ENCODE measurements at regions of chrX and their contacts with region 1.

Region 1: DNA sequence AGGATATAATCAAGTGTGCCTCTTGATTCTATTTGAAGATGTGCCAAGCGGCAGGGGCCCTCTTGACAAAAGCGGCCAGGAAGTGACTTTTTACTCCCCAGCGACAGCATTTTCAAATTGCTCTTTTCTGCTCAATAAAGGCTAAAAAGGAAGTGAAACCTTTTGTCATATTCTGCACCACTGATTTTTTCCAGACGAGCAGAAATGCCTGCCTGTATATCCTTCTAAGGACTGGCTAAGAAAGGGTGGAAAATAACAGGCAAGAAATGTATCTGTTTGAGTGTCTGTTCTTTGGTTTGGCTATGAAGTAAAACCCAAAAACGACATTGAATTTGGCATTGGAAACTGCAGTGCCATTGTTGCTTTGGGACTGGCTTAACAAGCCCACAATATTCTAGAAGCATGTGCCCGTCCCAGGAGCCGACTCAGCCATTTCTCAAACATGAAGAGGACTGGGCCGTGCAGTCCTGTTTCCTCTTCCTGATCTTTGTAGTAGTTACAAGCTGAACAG is 25.4 kb downstream of the TMSB4X start:
- DNase-seq: no peak
- ATAC-seq: peak; percentile 58
- H3K4me3 Mint-ChIP-seq: peak overlapping the region; percentile 79
- H3K27ac Mint-ChIP-seq: peak overlapping the region; percentile 95
- H3K4me1 Mint-ChIP-seq: peaks cover 42% of the 10 kb centered on the region
- H3K27me3 Mint-ChIP-seq: no peaks in the 10 kb centered on the region

Region 2: GRCh38 chrX:12955882-12956703 is 44.3 kb before region 1 on chrX:
- POLR2A ChIA-PET with region 1: interaction called, 26 read pairs
- DNase-seq: peak; percentile 71
- ATAC-seq: peak; percentile 25
- H3K4me3 Mint-ChIP-seq: peak overlapping the region; percentile 97
- H3K27ac Mint-ChIP-seq: peak overlapping the region; percentile 97
- H3K4me1 Mint-ChIP-seq: peaks cover 56% of the 10 kb centered on the region
- H3K27me3 Mint-ChIP-seq: no peaks in the 10 kb centered on the region

Region 3: GRCh38 chrX:12974796-12975669 is 25.3 kb before region 1 on chrX and contains the start of gene TMSB4X:
- POLR2A ChIA-PET with region 1: interaction called, 107 read pairs
- DNase-seq: peak; percentile 86
- ATAC-seq: peak; percentile 48
- H3K4me3 Mint-ChIP-seq: peak within 1 kb of the TSS; percentile 97
- H3K27ac Mint-ChIP-seq: peak within 1 kb of the TSS; percentile 98
- H3K4me1 Mint-ChIP-seq: peaks cover 42% of the 10 kb centered on the region
- H3K27me3 Mint-ChIP-seq: no peaks in the 10 kb centered on the region
- total RNA-seq, gene TMSB4X: 8,001 to 8,464 TPM

Region 4: GRCh38 chrX:12984629-12985319 is 15.6 kb before region 1 on chrX:
- POLR2A ChIA-PET with region 1: interaction called, 107 read pairs
- DNase-seq: peak; percentile 66
- ATAC-seq: peak; percentile 69
- H3K4me3 Mint-ChIP-seq: peak overlapping the region; percentile 53
- H3K27ac Mint-ChIP-seq: peak overlapping the region; percentile 91
- H3K4me1 Mint-ChIP-seq: peaks cover 49% of the 10 kb centered on the region
- H3K27me3 Mint-ChIP-seq: peaks cover 2% of the 10 kb centered on the region

Region 5: GRCh38 chrX:13078739-13079444 is 78.5 kb after region 1 on chrX:
- POLR2A ChIA-PET with region 1: interaction called, 12 read pairs
- DNase-seq: no peak
- ATAC-seq: no peak
- H3K4me3 Mint-ChIP-seq: peak overlapping the region; percentile 71
- H3K27ac Mint-ChIP-seq: peak overlapping the region; percentile 88
- H3K4me1 Mint-ChIP-seq: peaks cover 66% of the 10 kb centered on the region
- H3K27me3 Mint-ChIP-seq: no peaks in the 10 kb centered on the region

Region 6: DNA sequence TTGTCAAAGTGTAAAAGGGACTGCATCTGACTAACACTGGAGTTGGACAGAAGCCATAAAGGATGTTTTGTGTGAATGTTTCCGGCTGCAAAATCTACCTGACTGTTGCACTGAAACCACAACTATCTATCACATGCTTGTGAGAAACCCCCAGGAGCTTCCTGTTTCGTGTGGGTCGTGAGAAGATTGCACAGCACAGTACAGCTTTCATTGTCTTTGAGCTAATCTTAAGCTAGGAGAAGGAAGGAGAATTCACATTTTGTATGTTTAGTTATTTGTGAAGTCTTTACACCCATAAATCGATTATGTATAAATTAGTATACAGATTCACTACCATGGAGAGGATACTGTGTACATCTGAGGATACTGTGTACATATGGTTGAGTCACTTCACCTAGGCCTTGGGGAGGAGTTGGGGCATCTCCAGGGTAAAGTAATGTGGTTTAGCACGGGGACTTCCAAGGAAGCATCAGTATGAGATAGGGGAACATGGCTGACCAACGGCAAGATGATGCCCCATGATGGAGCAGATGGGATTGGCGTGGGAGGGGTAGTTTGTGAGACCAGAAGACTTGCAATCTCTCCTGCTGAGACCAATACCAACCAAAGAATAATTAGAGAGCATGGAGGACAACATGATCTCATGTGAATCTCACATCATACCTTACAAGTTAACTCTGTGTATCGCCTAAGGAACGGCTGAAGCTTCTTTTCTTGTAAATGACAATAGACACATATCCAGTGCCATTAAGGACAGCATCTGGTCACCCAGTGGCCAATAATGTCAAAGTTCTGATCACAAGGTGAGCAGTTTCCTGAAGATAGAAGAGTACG is 87.2 kb after region 1 on chrX:
- POLR2A ChIA-PET with region 1: interaction called, 18 read pairs
- DNase-seq: no peak
- ATAC-seq: peak; percentile 49
- H3K4me3 Mint-ChIP-seq: peak overlapping the region; percentile 87
- H3K27ac Mint-ChIP-seq: peak overlapping the region; percentile 98
- H3K4me1 Mint-ChIP-seq: peaks cover 61% of the 10 kb centered on the region
- H3K27me3 Mint-ChIP-seq: no peaks in the 10 kb centered on the region

Region 7: GRCh38 chrX:13194291-13195103 is 194.1 kb after region 1 on chrX:
- POLR2A ChIA-PET with region 1: no interaction called
- DNase-seq: no peak
- ATAC-seq: no peak
- H3K4me3 Mint-ChIP-seq: no peak overlapping the region
- H3K27ac Mint-ChIP-seq: no peak overlapping the region
- H3K4me1 Mint-ChIP-seq: no peaks in the 10 kb centered on the region
- H3K27me3 Mint-ChIP-seq: no peaks in the 10 kb centered on the region